GM12878 (cell line): ENCODE measurements at regions of chr20 and their contacts with region 1.

Region 1: DNA sequence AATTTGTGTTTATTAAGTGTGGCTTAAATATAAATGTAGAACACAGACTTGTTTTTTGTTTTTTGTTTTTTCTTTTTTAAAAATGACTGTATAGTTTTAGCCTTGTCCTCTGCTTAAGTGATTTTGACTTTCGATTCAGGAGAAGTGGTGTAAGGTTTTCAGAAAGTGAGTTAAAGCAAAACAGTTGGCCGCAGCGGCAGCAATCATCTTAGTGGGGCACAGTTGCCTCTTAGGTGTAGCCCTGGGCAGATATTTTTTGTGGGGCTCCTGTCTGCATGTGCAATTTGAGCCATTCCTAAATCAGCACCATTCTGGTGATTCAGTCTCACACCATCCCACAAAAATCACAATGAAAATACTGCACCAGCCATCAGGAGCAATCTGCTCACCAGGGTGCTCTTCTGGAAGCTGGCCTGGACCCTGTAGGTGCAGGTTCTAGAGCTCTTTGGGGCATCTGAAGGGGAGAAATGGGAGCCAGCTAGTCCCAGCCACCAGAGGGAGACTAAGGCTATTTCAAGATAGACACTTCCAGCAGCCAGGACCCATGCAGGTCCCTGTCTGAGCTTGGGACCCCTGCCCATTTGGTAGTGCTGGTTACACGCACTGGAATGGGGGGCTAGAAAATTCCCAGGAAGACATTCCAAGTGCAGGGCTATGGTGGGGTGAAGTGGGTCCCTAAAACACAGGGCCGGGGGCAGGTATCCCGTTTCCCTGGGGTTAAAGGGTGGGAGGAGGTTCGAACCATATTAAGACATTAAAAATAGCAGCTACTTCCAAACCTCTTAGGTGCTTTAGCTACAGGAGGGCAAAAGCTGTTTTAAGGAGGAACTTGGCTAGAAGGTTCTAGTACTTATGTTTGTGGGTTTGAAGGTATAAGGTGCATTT is 156.6 kb downstream of the NFATC2 start:
- DNase-seq: no peak
- ATAC-seq: peak; percentile 78
- H3K4me3 ChIP-seq: no peak overlapping the region
- H3K27ac ChIP-seq: no peak overlapping the region
- H3K4me1 ChIP-seq: peaks cover 31% of the 10 kb centered on the region
- H3K27me3 ChIP-seq: no peaks in the 10 kb centered on the region
- CTCF ChIP-seq: peak; percentile 54 to 68 (median 63); a peak in 5 of 6 replicates
- EP300 ChIP-seq: no peak
- POLR2A ChIP-seq: no peak
- RAD21 ChIP-seq: peak; percentile 74

Region 2: DNA sequence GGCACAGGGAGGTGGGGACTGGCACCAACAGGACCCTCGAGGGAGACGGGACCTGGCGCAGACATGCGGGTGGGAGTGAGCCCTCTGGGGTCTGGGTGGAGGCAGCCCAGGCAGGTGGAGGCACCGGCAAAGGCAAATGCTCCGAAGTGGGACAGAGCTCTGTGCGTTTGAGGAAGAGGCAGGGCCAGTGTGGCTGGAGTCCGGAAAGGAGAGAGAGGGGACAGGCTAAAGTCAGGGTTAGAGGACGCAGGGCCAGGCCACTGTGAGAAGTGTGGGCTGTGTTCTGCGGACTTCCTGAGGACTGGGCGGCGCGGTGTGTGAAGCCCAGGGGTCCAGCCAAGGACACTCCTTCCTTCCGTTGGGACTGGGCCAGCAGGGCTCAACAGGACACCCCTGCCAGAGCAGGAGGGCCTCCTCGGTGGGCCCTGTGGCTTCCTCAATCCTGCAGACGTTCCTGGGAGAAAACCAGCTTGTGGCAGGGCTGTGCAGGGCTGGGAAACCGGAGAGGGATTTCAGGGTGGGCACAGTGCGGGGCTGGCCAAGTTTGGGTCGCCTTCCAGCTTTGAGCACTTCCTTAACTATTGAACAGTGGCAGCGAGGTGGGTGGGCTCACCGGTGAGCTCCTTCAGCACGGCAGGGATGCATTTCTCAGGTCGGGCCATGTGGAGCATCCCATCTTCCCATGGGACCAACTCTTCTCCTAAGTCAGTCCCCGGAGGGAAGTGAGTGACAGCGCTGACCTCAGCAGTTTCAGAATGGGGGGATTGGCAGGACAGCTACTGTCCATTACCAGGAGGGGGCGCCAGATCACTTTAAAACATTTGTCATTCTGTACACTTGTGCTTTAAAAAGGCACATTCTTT is 404.8 kb before region 1 on chr20:
- CTCF ChIA-PET with region 1: no interaction called
- POLR2A ChIA-PET with region 1: no interaction called
- RAD21 ChIA-PET with region 1: no interaction called
- SMC1A ChIA-PET with region 1: no interaction called
- in situ Hi-C with region 1: no loop called
- intact Hi-C with region 1: no loop called
- DNase-seq: peak; percentile 2
- ATAC-seq: peak; percentile 88
- H3K4me3 ChIP-seq: no peak overlapping the region
- H3K27ac ChIP-seq: no peak overlapping the region
- H3K4me1 ChIP-seq: no peaks in the 10 kb centered on the region
- H3K27me3 ChIP-seq: no peaks in the 10 kb centered on the region; a peak in 1 of 4 replicates
- CTCF ChIP-seq: peak; percentile 70 to 90 (median 74)
- EP300 ChIP-seq: no peak
- POLR2A ChIP-seq: no peak
- RAD21 ChIP-seq: peak; percentile 38

Region 3: GRCh38 chr20:51360451-51361221 is 25.3 kb before region 1 on chr20:
- CTCF ChIA-PET with region 1: no interaction called
- POLR2A ChIA-PET with region 1: no interaction called
- RAD21 ChIA-PET with region 1: no interaction called
- SMC1A ChIA-PET with region 1: no interaction called
- in situ Hi-C with region 1: no loop called
- intact Hi-C with region 1: no loop called
- DNase-seq: no peak
- ATAC-seq: no peak
- H3K4me3 ChIP-seq: no peak overlapping the region
- H3K27ac ChIP-seq: no peak overlapping the region
- H3K4me1 ChIP-seq: peaks cover 3% of the 10 kb centered on the region; the same call in 1 of the 2 replicates
- H3K27me3 ChIP-seq: no peaks in the 10 kb centered on the region
- CTCF ChIP-seq: no peak
- EP300 ChIP-seq: no peak
- POLR2A ChIP-seq: no peak
- RAD21 ChIP-seq: no peak

Region 4: DNA sequence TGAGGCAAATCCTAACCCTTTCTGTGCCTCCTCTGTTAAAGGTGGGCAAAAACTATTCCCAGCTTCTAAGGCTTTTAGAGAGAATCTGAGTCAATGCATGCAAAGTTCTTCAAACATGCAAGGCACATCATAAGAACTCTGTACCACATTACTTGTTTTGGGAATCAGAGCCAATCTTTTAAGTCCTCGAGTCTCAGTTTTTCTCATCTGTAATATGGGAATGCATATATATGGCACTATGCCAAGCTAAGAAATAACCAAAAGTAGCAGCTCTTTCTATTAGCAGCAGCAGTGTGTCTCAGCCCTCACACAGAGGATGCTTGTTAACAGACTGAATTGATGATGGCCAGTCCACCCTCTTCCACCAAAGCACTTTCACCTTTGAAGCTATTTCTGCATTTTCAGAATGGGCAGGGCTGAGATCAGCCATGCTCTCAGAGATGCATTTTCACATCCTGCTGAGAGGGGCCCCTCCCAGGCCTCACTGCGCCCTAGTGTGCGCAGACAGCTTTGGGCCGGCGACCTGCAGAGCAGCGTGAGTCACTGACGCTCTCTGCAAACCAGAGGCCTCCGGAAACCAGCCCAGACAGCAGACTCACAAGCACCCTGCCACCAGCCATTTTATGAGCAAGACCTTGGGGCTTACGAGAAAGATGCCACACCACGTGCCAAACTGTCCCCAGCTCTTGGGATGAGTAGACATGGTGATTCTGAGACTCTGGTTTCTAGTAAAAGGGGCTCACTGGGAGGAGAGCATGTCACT is 18.6 kb after region 1 on chr20:
- CTCF ChIA-PET with region 1: interaction called, 16 read pairs
- POLR2A ChIA-PET with region 1: interaction called, 8 read pairs
- RAD21 ChIA-PET with region 1: interaction called, 18 read pairs
- SMC1A ChIA-PET with region 1: interaction called, 12 read pairs
- in situ Hi-C with region 1: no loop called
- intact Hi-C with region 1: no loop called
- DNase-seq: peak; percentile 80
- ATAC-seq: peak; percentile 88
- H3K4me3 ChIP-seq: no peak overlapping the region
- H3K27ac ChIP-seq: peak overlapping the region; percentile 73
- H3K4me1 ChIP-seq: peaks cover 61% of the 10 kb centered on the region
- H3K27me3 ChIP-seq: no peaks in the 10 kb centered on the region
- CTCF ChIP-seq: no peak
- EP300 ChIP-seq: peak; percentile 16 to 77; a peak in 2 of 4 replicates
- POLR2A ChIP-seq: peak; percentile 70
- RAD21 ChIP-seq: no peak

Region 5: DNA sequence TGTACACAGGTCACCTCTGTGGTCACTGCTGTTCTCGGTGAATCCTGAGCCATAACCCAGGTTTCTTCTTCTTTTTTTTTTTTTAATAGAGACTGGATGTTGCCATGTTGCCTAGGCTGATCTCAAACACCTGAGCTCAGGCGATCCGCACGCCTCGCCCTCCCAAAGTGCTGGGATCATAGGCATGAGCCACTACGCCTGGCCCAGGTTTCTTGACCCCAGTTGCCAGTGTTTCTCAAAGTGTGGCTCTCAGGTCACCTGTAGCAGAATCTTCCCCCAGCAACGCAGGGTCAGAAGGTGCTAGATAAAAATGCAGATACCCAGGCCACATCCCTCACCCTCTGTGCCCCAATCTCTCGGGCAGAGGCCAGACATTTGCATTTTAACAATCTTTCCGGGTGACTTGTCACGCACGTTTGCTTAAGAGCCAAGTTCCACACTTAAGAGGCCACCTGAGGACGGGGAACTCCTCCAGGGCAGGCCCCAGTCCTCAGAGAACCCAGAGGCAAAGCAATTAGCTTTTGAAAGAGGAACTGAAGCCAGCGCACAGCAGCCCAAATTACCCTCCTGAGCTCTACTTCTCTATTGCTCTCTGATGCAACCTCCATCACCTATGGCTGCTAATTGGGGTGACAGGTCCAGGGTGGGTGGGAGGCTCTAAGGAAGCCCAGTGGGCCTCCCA is 74.8 kb after region 1 on chr20:
- CTCF ChIA-PET with region 1: interaction called, 8 read pairs
- POLR2A ChIA-PET with region 1: interaction called, 3 read pairs
- RAD21 ChIA-PET with region 1: interaction called, 15 read pairs
- SMC1A ChIA-PET with region 1: interaction called, 12 read pairs
- in situ Hi-C with region 1: no loop called
- intact Hi-C with region 1: loop called (anchors 5 kb)
- DNase-seq: peak; percentile 64
- ATAC-seq: peak; percentile 99
- H3K4me3 ChIP-seq: no peak overlapping the region
- H3K27ac ChIP-seq: peak overlapping the region; percentile 74
- H3K4me1 ChIP-seq: peaks cover 16% of the 10 kb centered on the region
- H3K27me3 ChIP-seq: no peaks in the 10 kb centered on the region
- CTCF ChIP-seq: no peak
- EP300 ChIP-seq: peak; percentile 89 to 90; a peak in 3 of 4 replicates
- POLR2A ChIP-seq: no peak
- RAD21 ChIP-seq: peak; percentile 7; the same call in 1 of the 2 replicates

Region 6: DNA sequence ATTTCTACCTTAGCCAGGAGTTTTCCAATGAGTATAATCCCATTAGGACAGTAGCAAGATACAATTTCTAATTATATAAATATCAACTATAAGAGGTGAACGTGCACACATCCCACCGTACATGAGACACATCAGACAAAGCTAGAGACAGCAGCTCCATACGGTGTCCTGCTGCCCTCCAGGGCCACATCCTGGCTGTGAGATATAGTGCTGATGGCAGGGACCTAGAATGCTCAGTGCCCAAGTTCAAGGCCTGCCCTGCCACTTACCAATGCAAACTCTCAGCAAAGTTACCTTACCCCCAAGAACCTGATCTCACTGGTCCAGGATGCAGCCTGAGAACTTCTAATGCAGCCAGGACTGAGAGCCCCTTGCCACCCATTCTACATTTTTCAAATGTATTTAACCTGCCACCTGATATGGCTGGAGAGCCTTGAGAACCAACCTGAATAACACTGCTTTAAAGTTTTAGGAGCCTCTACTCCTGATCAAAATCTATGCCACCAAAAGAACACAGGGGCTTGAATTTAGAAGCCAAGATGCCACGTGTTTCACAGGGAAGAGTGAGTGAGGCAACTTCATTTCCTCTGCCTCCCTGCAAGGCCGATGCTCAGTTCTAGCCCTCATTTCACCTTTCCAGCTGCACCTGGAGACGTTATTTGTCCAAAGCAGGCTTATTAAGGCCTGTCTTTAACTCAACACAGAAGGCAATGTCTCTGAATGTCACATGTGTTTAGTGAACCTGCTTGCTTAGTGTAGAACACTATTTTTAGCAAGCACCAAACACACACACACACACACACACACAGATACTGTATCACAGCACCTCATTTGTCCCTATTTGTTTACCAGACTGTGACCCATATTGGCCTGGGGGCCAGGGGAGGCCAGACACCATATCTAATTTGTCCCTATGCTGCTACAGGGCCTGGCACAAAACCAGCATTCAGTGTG is 150.5 kb after region 1 on chr20:
- CTCF ChIA-PET with region 1: interaction called, 28 read pairs
- POLR2A ChIA-PET with region 1: no interaction called
- RAD21 ChIA-PET with region 1: interaction called, 9 read pairs
- SMC1A ChIA-PET with region 1: interaction called, 20 read pairs
- in situ Hi-C with region 1: no loop called
- intact Hi-C with region 1: loop called (anchors 5 kb)
- DNase-seq: no peak
- ATAC-seq: no peak
- H3K4me3 ChIP-seq: no peak overlapping the region
- H3K27ac ChIP-seq: peak overlapping the region; percentile 15; the same call in 1 of the 2 replicates
- H3K4me1 ChIP-seq: peaks cover 60% of the 10 kb centered on the region
- H3K27me3 ChIP-seq: no peaks in the 10 kb centered on the region
- CTCF ChIP-seq: no peak
- EP300 ChIP-seq: no peak
- POLR2A ChIP-seq: no peak
- RAD21 ChIP-seq: no peak

Region 7: DNA sequence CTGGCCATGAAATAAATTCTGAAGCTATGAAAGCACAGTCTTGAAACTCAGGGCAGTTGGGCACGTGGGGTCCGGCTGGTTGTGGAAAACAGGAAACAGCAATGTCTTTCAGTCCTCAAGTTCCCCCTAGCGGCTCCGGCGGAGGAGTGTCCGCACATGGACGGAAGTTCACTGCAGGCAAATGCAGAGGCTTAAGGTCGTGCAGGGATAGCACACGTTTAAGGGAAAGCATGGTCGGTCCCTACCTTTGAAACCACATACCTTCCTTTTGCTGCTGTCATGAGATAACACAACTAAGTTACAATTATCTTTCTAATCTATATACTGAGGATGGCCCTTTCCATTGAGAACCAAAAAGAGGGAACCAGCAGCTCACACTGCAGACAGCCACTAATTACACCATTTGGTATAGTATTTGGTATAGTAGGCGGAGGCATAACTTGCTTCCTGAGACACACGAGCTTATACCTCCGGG is 209.2 kb after region 1 on chr20:
- CTCF ChIA-PET with region 1: interaction called, 87 read pairs
- POLR2A ChIA-PET with region 1: interaction called, 3 read pairs
- RAD21 ChIA-PET with region 1: interaction called, 38 read pairs
- SMC1A ChIA-PET with region 1: interaction called, 60 read pairs
- in situ Hi-C with region 1: no loop called
- intact Hi-C with region 1: loop called (anchors 2 kb)
- DNase-seq: peak; percentile 45
- ATAC-seq: peak; percentile 98
- H3K4me3 ChIP-seq: no peak overlapping the region
- H3K27ac ChIP-seq: 0 out of 2 replicates have a peak overlapping the region, but pooled peaks have one; percentile 2
- H3K4me1 ChIP-seq: peaks cover 16% of the 10 kb centered on the region
- H3K27me3 ChIP-seq: no peaks in the 10 kb centered on the region; a peak in 1 of 4 replicates
- CTCF ChIP-seq: peak; percentile 89 to 97 (median 92)
- EP300 ChIP-seq: peak in 1 of 2 experiments; percentile 29; a peak in 1 of 4 replicates
- POLR2A ChIP-seq: no peak
- RAD21 ChIP-seq: peak; percentile 92